ENCODE measurements at regions of chr1 and their contacts with region 1.

Region 1: DNA sequence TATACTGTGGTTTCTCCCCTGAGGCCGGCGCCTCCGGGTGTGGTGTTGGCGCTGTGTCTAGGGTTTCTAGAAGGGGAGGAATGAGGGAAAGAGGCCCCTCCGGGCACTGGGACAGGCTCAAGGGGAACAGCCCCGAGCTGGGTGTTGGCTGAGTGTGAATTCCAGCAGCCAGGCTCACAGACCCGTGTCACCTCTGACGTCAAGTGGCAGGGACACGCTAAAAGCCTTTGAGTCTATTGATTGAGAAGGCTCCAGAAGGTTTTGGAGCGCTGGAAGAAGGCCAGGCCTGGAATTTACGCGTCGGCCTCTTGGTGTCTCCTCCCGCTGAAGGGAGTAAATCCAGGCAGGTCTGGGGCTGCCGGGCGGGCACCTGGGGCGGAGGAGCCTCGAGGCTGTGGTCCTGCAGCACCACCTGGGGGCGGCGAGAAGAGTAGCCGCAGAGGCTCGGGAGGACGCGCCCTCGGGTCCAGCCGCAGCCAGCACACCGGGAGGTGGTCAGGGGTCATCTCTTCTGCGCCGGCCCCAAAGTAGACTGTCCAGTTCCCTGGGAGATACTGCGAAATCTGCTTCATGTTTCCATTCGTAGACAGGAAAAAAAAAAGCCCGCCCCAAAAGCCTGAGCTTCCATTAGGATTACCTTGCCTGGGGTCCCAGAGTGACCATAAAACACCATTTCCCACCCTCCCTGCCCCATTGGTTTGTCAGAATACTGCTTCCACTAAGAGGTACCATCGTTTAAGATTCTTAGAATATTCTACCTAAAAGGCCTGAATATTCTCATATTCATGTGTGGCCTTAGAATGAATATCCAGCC is 61.7 kb downstream of the TLR5 start:
- DNase-seq: peak; percentile 52 to 82 (median 64)
- ATAC-seq: peak; percentile 95
- H3K4me3 ChIP-seq: peak overlapping the region; percentile 47
- H3K4me3 Mint-ChIP-seq: peak overlapping the region; percentile 58
- H3K27ac ChIP-seq: no peak overlapping the region
- H3K27ac Mint-ChIP-seq: no peak overlapping the region
- H3K4me1 ChIP-seq: peaks cover 6% of the 10 kb centered on the region
- H3K4me1 Mint-ChIP-seq: no peaks in the 10 kb centered on the region
- H3K27me3 ChIP-seq: peaks cover 0 to 3% of the 10 kb centered on the region in 2 experiments
- H3K27me3 Mint-ChIP-seq: peaks cover 5% of the 10 kb centered on the region
- CTCF ChIP-seq: peak; percentile 87

Region 2: DNA sequence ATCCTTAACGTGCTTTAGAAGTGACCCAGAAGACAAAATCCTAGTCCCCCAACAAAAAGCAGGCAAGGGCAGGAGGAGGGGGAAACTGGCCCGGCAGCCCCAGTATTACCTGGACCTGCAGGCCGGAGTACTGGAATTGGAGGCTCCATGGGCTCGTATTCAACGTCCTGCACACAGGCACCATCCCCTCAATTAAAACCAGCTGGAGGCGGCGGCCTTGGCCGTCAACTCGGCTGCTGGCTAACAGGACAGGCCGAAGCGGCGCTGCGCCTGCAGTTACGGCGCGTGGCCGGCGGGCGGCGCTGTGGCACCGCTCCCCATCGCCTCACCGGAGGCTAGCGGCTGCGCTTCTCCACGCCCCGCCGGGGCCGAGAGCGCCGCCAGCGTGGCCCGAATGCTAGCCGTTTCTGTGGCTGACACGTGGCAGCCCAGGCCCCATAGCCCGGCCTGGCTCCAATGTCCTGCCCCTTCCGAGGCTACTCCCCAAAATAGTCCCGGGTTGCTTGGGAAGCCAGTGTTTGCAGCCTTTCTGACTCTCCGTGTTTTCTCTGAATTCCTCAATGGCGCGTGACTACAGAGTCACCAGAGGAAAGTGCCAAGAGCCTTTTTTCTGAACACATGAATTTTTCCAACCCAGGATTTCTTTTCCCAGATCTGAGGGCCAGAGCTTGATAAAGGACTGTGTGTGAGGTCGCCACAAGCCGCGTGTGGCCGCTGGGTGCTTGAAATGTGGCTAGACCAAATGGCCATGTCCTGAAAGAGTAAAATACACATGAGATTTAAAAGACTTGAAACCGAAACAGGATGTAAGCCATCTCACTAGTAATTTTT is 616.0 kb before region 1 on chr1:
- CTCF ChIA-PET with region 1: no interaction called
- POLR2A ChIA-PET with region 1: no interaction called
- intact Hi-C with region 1: loop called in 1 of 2 experiments (anchors 5 kb)
- DNase-seq: peak; percentile 49 to 89 (median 72)
- ATAC-seq: peak; percentile 91
- H3K4me3 ChIP-seq: peak overlapping the region; percentile 69
- H3K4me3 Mint-ChIP-seq: peak overlapping the region; percentile 94
- H3K27ac ChIP-seq: peak overlapping the region; percentile 25 to 34
- H3K27ac Mint-ChIP-seq: peak overlapping the region; percentile 93
- H3K4me1 ChIP-seq: peaks cover 10% of the 10 kb centered on the region
- H3K4me1 Mint-ChIP-seq: peaks cover 19% of the 10 kb centered on the region
- H3K27me3 ChIP-seq: no peaks in the 10 kb centered on the region
- H3K27me3 Mint-ChIP-seq: peaks cover 5% of the 10 kb centered on the region
- CTCF ChIP-seq: peak; percentile 100

Region 3: DNA sequence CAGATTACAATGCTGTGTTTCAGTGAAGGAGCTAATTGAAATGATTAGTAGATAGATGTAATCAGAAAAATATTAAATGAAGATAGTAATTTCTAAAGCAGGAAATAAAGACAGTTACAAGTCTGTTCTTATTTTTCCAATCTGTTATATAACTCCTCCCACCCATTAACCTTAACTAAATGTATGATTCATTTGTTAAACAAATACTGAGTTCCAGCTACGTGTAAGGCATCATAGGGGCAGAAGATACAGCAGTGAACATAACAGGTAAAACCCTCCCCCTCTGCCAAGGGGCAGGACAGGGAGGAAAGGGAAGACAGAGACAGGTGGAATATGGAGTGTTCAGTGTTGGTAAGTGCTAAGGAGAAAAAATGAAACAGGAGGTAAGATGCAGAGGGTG is 344.4 kb before region 1 on chr1 and contains the start of gene FAM177B:
- CTCF ChIA-PET with region 1: no interaction called
- POLR2A ChIA-PET with region 1: no interaction called
- intact Hi-C with region 1: loop called in 1 of 2 experiments (anchors 2 kb)
- DNase-seq: no peak
- ATAC-seq: no peak
- H3K4me3 ChIP-seq: no peak within 1 kb of the TSS
- H3K4me3 Mint-ChIP-seq: no peak within 1 kb of the TSS
- H3K27ac ChIP-seq: no peak within 1 kb of the TSS
- H3K27ac Mint-ChIP-seq: no peak within 1 kb of the TSS
- H3K4me1 ChIP-seq: no peaks in the 10 kb centered on the region
- H3K4me1 Mint-ChIP-seq: no peaks in the 10 kb centered on the region
- H3K27me3 ChIP-seq: no peaks in the 10 kb centered on the region
- H3K27me3 Mint-ChIP-seq: no peaks in the 10 kb centered on the region
- CTCF ChIP-seq: no peak
- total RNA-seq, gene FAM177B: not detected

Region 4: GRCh38 chr1:222792744-222793143 is 288.6 kb before region 1 on chr1:
- CTCF ChIA-PET with region 1: no interaction called
- POLR2A ChIA-PET with region 1: no interaction called
- intact Hi-C with region 1: loop called (anchors 1 kb)
- DNase-seq: peak in 3 of 14 experiments; percentile 23 to 41 (median 38)
- ATAC-seq: no peak
- H3K4me3 ChIP-seq: no peak overlapping the region
- H3K4me3 Mint-ChIP-seq: no peak overlapping the region
- H3K27ac ChIP-seq: no peak overlapping the region
- H3K27ac Mint-ChIP-seq: no peak overlapping the region
- H3K4me1 ChIP-seq: no peaks in the 10 kb centered on the region
- H3K4me1 Mint-ChIP-seq: no peaks in the 10 kb centered on the region
- H3K27me3 ChIP-seq: no peaks in the 10 kb centered on the region
- H3K27me3 Mint-ChIP-seq: no peaks in the 10 kb centered on the region
- CTCF ChIP-seq: peak; percentile 74